ENCODE measurements at regions of chr11 and their contacts with region 1.

Region 1: GRCh38 chr11:65497141-65498041 is 1.5 kb upstream of the MALAT1 start:
- DNase-seq: peak; percentile 99
- ATAC-seq: peak; percentile 77
- H3K4me3 Mint-ChIP-seq: no peak overlapping the region
- H3K27ac Mint-ChIP-seq: no peak overlapping the region
- H3K4me1 Mint-ChIP-seq: peaks cover 34% of the 10 kb centered on the region
- H3K27me3 Mint-ChIP-seq: peaks cover 6% of the 10 kb centered on the region

Region 2: GRCh38 chr11:65382033-65382807 is 115.2 kb before region 1 on chr11 and contains the start of gene SLC25A45:
- CTCF ChIA-PET with region 1: interaction called, 11 read pairs
- DNase-seq: peak; percentile 94
- ATAC-seq: peak; percentile 84
- H3K4me3 Mint-ChIP-seq: peak within 1 kb of the TSS; percentile 80
- H3K27ac Mint-ChIP-seq: peak within 1 kb of the TSS; percentile 98
- H3K4me1 Mint-ChIP-seq: peaks cover 51% of the 10 kb centered on the region
- H3K27me3 Mint-ChIP-seq: no peaks in the 10 kb centered on the region
- total RNA-seq, gene SLC25A45: 19.4 to 25.1 TPM

Region 3: DNA sequence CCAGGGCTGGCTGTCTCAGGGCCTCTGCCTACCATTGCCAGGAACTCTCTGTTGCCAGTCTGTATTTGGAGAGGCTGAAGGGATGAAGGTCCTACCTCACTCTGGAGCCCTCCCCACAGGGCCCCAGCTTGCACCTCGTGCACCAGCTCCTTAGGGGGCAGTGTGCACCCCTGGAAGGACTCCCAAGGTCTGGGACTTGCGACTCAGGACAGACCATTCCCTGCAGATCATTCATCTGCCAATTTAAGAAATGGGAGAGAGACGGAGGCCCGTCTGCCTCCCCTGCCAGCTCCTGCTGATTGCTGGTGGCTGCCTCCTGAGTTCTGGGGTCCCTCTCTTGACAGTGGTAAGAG is 26.0 kb before region 1 on chr11:
- CTCF ChIA-PET with region 1: interaction called, 102 read pairs
- DNase-seq: no peak
- ATAC-seq: peak; percentile 2
- H3K4me3 Mint-ChIP-seq: no peak overlapping the region
- H3K27ac Mint-ChIP-seq: peak overlapping the region; percentile 91
- H3K4me1 Mint-ChIP-seq: peaks cover 31% of the 10 kb centered on the region
- H3K27me3 Mint-ChIP-seq: no peaks in the 10 kb centered on the region

Region 4: DNA sequence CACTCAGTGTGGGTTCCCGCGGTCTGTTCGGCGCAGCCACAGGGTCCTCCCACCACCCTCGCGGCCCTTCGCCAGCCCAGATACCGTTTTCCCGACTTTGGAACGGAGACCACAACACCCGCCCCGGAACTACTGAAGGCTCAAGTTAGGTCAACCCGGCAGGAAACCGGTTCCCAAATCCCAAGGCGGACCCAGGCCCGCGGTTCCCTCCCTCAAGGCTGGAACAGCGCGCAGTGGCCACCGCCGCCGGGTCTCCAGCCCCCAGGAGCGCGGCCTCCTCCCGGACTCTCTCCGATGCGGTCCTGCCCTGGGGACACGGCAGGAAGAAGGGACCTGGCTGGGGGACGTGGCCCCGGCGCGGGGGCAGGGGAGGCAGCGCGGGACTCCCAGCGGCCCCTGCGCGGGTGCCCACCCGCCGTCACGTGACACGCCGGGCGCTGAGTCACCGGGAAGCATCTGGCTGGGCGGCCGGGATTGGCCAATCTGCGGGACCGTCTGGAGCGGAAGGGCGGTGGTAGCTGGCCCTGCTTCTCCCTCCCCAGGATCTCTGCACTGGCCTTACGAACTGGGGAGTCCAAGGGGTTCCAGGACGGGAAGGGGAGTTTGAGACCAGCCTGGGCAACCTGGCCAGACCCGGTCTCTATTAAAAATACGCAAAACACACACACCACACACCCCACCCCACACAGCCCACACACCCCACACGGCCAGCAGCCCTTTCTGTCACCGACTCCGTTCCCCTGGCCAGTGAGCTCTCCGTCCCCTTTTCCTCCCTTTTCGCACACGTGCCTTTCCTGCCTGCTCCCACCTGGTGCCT is 20.0 kb before region 1 on chr11:
- CTCF ChIA-PET with region 1: interaction called, 102 read pairs
- DNase-seq: peak; percentile 94
- ATAC-seq: peak; percentile 90
- H3K4me3 Mint-ChIP-seq: peak overlapping the region; percentile 83
- H3K27ac Mint-ChIP-seq: peak overlapping the region; percentile 95
- H3K4me1 Mint-ChIP-seq: peaks cover 20% of the 10 kb centered on the region
- H3K27me3 Mint-ChIP-seq: peaks cover 2% of the 10 kb centered on the region